GM18951 (cell line): ENCODE measurements at regions of chr10 and their contacts with region 1.

Region 1: GRCh38 chr10:62038609-62039190 is 137.2 kb downstream of the ARID5B start:
- POLR2A ChIP-seq: no peak

Region 2: DNA sequence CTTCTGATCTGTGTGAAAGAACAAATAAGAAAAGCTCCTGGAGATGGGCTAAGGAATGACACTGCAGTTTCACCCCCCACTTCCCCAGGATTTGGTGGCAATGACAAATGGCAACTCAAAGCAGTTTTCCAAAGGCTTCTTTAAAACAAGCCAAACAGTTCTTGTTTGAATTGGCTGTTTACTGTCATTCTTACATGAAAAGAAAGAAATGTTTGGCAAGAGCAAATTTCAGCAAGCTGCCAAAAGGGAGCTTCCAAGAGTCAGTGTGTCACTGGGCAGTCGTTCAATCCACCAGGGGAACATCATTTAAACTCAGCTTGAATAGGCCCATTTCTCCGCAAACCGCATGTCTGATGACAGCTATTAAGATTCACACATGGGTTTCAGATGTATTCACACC is 975.7 kb before region 1 on chr10:
- in situ Hi-C with region 1: no loop called
- POLR2A ChIP-seq: no peak

Region 3: GRCh38 chr10:61140765-61141392 is 897.8 kb before region 1 on chr10:
- in situ Hi-C with region 1: loop called (anchors 25 kb)
- POLR2A ChIP-seq: no peak

Region 4: GRCh38 chr10:62244780-62245467 is 206.2 kb after region 1 on chr10:
- in situ Hi-C with region 1: loop called (anchors 5 kb)
- POLR2A ChIP-seq: no peak

Region 5: GRCh38 chr10:62437696-62438095 is 399.0 kb after region 1 on chr10:
- in situ Hi-C with region 1: loop called (anchors 25 kb)
- POLR2A ChIP-seq: no peak